OCI-LY7 (cell line): ENCODE measurements at regions of chr12 and their contacts with region 1.

Region 1: DNA sequence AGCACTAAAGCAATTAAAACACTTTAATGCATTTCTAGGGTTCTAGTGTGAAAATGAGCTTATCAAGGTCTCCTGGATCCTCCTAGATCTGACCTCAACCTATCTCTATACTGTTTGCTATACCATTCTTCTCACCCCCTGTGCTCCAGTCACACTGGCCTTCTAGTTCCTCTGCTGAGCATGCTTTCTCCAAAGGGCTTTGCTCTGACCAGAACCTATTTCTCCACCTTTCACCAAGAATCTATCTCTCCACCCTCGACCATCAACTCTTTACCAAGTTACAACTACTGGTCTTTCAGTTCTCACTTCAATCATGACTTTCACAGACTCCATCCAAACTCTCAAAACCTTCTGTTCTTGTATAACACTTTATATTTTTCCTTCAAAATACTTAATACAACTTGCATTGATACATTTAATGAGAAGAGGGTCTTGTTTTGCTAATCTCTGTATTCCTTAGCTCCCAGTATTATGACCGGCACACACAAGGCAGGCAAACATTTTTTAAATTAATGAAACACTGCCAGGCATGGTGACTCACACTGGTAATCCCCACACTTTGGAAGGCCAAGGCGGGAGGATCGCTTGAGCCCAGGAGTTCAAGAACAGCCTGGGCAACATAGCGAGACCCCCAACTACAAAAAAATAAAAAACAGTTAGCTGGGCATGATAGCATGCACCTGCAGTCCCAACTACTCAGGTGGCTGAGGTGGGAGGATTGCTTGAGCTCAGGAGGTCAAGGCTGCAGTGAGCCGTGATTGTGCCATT is 22.8 kb downstream of the PPP1R12A start:
- DNase-seq: no peak
- H3K4me3 ChIP-seq: no peak overlapping the region
- H3K27ac ChIP-seq: no peak overlapping the region
- H3K4me1 ChIP-seq: no peaks in the 10 kb centered on the region
- CTCF ChIP-seq: no peak

Region 2: GRCh38 chr12:79895071-79895470 is 17.0 kb before region 1 on chr12:
- CTCF ChIA-PET with region 1: no interaction called
- POLR2A ChIA-PET with region 1: interaction called, 13 read pairs
- intact Hi-C with region 1: no loop called
- DNase-seq: no peak
- H3K4me3 ChIP-seq: no peak overlapping the region
- H3K27ac ChIP-seq: no peak overlapping the region
- H3K4me1 ChIP-seq: no peaks in the 10 kb centered on the region
- CTCF ChIP-seq: no peak